AG04449 (cell line): ENCODE measurements at regions of chr20 and their contacts with region 1.

Region 1: DNA sequence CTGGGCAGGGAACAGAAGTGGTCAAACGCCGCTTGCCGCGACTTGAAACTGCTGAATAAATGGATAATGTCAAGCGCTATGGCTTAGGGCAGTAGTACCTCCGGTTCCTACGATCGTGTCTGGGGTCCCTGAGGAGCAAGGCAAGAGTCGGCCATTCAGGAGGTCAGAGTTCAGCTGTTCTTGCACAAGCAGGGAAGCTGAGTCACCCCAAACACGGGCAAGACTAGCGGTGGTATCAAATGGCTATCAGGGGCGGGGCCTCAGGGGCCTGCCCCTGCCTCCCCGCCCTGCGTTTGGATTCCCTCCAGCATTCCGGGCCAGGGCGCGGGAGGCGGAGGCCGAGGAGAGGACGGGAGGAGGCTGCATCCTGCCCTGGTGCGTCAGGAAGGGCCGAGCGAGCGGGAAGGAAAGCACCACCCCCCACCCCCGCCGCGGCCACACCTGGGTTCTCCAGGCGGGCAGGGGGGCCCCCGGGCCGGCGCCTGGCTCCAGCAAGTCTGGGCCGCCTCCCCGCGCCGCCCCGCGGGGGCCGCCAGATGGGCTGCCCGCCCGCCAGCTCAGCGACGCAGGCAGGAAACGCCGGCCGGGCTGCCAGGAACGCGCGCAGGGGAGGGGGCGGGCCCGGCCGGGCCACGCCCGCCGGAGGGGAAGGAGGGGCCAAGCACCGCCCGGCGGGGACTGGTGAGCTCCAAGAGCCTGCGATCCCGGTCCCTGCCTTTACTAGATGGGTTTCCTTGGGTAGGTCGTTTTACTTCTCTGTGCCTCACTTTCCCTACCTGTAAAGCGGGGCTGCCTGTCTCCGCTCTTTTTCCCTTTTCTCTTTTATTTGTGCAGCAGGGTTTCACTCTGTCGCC is 32.2 kb upstream of the ID1 start:
- DNase-seq: peak; percentile 89
- H3K4me3 ChIP-seq: peak overlapping the region; percentile 62
- CTCF ChIP-seq: no peak

Region 2: DNA sequence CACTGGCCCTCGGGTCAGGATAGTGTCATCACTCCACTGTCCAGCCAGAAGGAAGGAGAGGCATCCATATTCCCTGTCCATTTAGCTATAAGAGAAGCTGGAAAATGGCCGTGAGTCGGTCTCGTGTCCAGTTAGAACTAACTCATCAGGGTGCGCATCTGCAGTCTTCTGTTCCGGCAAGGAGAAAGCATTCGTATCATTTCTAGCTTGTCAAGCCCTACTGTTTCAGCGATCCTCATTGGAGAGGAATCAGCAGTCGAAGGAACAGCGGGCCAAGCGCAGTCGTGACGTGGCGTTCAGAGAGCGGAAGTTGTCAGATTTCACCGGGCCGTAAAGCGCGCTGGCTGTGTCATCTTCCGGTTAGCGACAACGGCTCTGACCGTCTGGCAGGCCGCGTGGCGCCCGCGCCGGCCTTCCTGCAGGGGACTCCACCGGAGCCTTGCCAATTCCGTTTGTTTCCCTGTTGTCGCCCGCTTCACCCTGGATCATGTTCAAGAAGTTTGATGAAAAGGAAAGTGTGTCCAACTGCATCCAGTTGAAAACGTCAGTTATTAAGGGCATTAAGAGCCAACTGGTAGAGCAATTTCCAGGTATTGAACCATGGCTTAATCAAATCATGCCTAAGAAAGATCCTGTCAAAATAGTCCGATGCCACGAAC is 25.8 kb before region 1 on chr20:
- CTCF ChIA-PET with region 1: interaction called, 42 read pairs
- POLR2A ChIA-PET with region 1: interaction called, 7 read pairs
- DNase-seq: no peak
- H3K4me3 ChIP-seq: peak overlapping the region; percentile 59
- CTCF ChIP-seq: no peak

Region 3: DNA sequence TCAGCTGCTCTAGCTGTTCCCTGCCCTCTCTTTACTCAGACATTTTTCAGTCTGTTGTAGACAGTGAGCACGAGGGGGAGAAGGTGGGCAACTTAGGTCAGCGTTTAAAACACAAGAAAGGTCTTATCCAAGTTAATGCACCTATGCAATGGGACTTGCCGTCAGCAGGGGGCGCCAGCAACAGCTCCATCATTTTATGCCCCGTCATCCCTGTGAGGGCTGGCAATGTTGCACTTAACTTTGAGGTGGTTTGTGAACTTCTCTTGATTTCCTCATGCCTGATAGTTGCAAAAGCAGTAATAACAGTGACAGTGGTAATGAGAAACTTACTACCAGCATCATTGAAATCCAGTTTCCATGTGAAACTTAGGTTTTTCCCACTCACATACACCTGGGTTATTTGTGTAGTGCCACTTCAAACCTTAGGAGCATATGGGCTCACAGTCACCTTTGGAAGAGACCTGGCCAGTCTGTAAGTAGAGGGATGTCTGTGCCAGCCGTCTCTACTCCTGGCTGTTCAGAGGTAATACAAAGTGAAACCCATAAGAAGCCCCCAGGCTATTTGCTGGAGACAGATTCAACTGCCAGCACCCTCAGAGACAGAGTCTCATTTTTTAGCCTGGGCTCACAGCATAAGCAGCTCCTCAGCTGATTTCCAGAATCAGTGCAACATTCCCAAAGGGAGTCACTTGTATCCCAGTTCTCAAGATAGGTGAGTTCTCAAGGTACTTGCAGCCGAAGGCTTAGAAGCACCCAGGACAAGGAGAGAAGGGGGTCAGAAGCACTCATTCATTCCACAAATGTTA is 12.6 kb before region 1 on chr20:
- CTCF ChIA-PET with region 1: interaction called, 202 read pairs
- POLR2A ChIA-PET with region 1: interaction called, 12 read pairs
- DNase-seq: no peak
- H3K4me3 ChIP-seq: no peak overlapping the region
- CTCF ChIP-seq: peak; percentile 89

Region 4: GRCh38 chr20:31587545-31588389 is 14.8 kb after region 1 on chr20:
- CTCF ChIA-PET with region 1: interaction called, 42 read pairs
- POLR2A ChIA-PET with region 1: interaction called, 5 read pairs
- DNase-seq: no peak
- H3K4me3 ChIP-seq: peak overlapping the region; percentile 55
- CTCF ChIP-seq: no peak

Region 5: DNA sequence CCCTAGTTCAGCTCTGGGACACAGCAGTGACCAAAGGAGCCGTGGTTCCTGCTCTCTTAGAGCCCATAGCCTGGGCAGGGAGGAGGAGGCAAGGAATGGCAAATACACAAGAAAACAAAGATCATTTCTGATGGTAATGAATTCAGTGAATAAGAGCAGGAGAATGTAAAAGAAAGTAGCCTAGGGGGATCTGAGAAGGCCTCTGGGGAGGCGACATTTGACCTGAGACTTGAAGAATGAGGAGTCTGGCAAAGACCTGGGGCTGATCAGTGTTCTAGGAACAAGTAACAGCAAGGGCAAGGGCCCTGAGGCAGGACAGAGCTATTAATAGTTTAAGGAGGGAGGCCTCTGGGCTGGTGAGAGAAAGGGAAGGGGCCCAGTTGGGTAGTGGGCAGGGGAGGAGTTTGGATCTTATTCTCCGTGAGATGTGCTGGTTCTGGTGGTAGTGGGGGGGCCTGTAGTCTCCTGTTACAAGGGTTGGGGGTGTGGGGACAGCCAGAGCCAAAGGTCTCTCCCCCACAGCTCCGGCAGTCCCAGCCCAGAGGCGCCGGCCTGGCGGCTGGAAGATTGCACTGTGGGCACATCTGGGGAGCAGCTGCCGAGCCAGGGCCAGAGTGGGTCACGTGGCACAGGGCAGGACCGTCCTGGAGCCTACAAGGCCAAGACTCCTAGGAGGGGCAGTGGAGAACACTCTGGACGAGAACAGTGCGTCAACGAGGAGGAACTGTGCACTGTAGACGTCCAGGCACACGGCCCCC is 22.9 kb after region 1 on chr20:
- CTCF ChIA-PET with region 1: interaction called, 1,856 read pairs
- POLR2A ChIA-PET with region 1: interaction called, 4 read pairs
- DNase-seq: no peak
- H3K4me3 ChIP-seq: no peak overlapping the region
- CTCF ChIP-seq: no peak

Region 6: DNA sequence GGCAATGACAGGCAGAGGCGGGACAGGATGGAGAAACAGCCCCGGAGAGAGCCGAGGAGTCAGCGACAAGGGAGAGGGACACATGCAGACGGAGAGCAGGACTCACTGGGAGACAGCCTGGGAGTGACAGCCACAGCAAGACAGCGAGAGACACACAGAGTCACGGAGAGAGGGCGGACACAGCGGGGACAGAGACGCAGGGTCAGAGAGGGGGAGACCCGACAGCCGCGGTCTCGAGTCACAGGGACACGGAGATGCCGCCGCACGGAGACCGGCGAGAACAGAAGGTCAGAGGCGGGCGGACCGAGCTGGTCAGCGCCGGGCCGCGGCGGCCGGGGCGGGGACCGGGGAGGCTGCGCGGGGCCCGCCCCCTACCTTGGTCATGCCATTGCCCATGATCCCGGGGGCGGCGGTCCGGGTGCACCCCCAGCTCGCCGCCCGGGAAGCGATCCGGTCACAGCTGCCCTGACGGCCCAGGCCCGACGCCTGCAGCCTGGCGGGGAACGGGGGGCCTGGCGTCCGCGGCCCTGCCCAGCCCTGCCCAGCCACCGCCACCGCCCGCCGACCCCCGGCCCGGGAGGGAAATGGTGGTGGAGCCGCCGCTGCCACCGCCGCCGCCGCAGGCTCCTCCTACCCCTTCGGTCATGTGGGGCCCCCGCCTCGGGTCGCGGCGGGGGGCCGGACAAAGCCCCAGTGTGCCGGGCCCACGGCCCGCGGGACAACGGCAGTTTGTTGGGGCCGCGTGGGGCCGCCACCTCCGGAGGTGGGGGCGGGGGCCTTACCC is 297.2 kb after region 1 on chr20 and contains the starts of genes DUSP15 and TTLL9:
- CTCF ChIA-PET with region 1: no interaction called
- POLR2A ChIA-PET with region 1: no interaction called
- DNase-seq: no peak
- H3K4me3 ChIP-seq: peak within 1 kb of the TSS; percentile 27
- CTCF ChIP-seq: no peak